H1 (cell line): ENCODE measurements at regions of chr1 and their contacts with region 1.

Region 1: DNA sequence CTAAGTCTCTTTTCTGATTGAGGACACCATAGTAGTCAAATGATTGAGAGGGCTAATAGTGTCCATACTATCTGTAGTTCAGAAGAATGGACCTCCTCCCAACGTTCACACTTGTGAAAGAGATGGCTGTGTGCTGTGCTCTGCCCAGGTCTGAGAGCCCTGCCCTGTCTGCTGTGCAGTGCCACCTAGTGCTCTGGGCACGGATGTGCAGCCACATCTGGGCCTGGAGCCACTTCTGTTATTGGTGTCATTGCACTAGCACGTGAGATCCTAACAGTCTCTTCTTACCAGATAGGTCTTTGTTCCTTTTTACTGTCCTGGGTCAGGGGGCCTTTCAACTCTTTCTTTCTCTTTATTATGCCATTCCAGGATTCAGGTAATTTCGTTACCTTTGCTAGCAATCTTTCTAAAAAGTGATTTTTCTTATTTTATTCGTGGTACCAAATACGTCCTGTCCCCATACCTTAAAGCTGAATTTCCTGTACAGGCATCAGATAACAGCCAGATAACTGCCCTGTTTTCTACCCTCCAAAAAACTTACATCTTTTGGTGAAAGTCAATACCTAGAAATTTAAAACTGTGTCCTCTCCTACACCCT is 21.7 kb downstream of the INTS3 start:
- DNase-seq: peak; percentile 49 to 85
- H3K4me3 ChIP-seq: no peak overlapping the region
- H3K27ac ChIP-seq: no peak overlapping the region
- H3K4me1 ChIP-seq: peaks cover 3 to 34% (median 15%) of the 10 kb centered on the region in 4 experiments; a peak in 6 of 7 replicates
- H3K27me3 ChIP-seq: peaks cover 0 to 2% (median 0%) of the 10 kb centered on the region in 4 experiments; a peak in 1 of 7 replicates
- CTCF ChIP-seq: peak; percentile 94 to 99 (median 99)
- EP300 ChIP-seq: no peak
- POLR2A ChIP-seq: no peak
- RAD21 ChIP-seq: peak; percentile 92 to 94

Region 2: DNA sequence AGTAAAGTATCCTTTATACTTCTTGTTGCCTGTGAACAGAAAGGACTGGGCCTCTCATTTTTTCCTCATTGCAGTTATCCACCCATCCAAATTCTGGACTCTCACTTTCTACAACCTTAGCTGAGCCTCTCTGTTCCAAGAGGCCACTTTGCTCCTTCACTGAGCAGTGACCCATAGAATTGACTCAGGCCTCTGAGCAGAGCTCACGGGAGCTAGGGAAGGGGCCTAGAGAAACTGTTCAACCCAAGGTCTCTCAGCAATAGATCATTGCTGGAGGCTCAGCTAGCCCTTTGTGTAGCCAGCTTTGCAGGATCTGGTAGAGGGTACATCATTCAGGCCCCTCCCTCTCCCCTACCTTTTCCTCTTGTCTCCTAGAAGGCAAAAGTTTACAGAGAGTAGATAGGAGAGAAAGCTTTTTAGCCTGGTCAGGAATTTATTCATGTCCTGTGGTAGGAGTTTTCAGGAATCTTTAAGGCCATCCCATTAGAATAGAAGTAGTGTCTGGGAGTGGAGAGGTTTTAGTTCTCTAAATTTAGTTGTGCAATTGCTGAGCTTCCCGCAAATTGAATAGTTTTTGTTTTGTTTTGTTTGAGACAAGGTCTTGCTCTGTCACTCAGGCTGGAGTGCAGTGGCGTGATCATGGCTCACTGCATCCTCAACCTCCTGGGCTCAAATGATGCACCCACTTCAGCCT is 15.0 kb before region 1 on chr1:
- CTCF ChIA-PET with region 1: interaction called, 18 read pairs
- POLR2A ChIA-PET with region 1: interaction called, 60 read pairs
- DNase-seq: no peak
- H3K4me3 ChIP-seq: no peak overlapping the region
- H3K27ac ChIP-seq: no peak overlapping the region
- H3K4me1 ChIP-seq: peaks cover 0 to 2% (median 0%) of the 10 kb centered on the region in 4 experiments; a peak in 1 of 7 replicates
- H3K27me3 ChIP-seq: no peaks in the 10 kb centered on the region
- CTCF ChIP-seq: no peak
- EP300 ChIP-seq: no peak
- POLR2A ChIP-seq: no peak
- RAD21 ChIP-seq: no peak

Region 3: GRCh38 chr1:153763365-153764225 is 14.1 kb after region 1 on chr1:
- CTCF ChIA-PET with region 1: interaction called, 41 read pairs
- POLR2A ChIA-PET with region 1: interaction called, 8 read pairs
- DNase-seq: no peak
- H3K4me3 ChIP-seq: no peak overlapping the region
- H3K27ac ChIP-seq: no peak overlapping the region
- H3K4me1 ChIP-seq: no peaks in the 10 kb centered on the region
- H3K27me3 ChIP-seq: no peaks in the 10 kb centered on the region
- CTCF ChIP-seq: no peak
- EP300 ChIP-seq: no peak
- POLR2A ChIP-seq: no peak
- RAD21 ChIP-seq: no peak

Region 4: DNA sequence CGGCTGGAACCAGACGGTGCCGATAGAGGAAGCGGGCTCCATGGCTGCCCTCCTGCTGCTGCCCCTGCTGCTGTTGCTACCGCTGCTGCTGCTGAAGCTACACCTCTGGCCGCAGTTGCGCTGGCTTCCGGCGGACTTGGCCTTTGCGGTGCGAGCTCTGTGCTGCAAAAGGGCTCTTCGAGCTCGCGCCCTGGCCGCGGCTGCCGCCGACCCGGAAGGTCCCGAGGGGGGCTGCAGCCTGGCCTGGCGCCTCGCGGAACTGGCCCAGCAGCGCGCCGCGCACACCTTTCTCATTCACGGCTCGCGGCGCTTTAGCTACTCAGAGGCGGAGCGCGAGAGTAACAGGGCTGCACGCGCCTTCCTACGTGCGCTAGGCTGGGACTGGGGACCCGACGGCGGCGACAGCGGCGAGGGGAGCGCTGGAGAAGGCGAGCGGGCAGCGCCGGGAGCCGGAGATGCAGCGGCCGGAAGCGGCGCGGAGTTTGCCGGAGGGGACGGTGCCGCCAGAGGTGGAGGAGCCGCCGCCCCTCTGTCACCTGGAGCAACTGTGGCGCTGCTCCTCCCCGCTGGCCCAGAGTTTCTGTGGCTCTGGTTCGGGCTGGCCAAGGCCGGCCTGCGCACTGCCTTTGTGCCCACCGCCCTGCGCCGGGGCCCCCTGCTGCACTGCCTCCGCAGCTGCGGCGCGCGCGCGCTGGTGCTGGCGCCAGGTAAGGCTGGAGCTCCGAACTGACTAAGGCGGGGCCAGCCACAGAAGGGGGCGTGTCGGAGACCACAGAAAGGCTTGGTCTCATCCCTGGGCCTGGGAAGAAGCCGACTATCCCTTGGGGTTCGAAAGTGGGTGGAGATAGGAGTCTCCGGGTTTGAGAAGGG is 26.2 kb after region 1 on chr1:
- CTCF ChIA-PET with region 1: interaction called, 41 read pairs
- POLR2A ChIA-PET with region 1: interaction called, 7 read pairs
- DNase-seq: peak; percentile 70 to 92
- H3K4me3 ChIP-seq: peak overlapping the region; percentile 66 to 86 (median 83)
- H3K27ac ChIP-seq: peak overlapping the region; percentile 82
- H3K4me1 ChIP-seq: peaks cover 0 to 17% (median 11%) of the 10 kb centered on the region in 4 experiments; a peak in 6 of 7 replicates
- H3K27me3 ChIP-seq: no peaks in the 10 kb centered on the region; a peak in 1 of 7 replicates
- CTCF ChIP-seq: no peak; a peak in 1 of 4 replicates
- EP300 ChIP-seq: 0 out of 3 replicates have a peak, but pooled peaks of 1 of the 2 experiments have one; percentile 51
- POLR2A ChIP-seq: peak; percentile 70 to 93
- RAD21 ChIP-seq: peak in 1 of 2 experiments; percentile 2; a peak in 1 of 4 replicates

Region 5: DNA sequence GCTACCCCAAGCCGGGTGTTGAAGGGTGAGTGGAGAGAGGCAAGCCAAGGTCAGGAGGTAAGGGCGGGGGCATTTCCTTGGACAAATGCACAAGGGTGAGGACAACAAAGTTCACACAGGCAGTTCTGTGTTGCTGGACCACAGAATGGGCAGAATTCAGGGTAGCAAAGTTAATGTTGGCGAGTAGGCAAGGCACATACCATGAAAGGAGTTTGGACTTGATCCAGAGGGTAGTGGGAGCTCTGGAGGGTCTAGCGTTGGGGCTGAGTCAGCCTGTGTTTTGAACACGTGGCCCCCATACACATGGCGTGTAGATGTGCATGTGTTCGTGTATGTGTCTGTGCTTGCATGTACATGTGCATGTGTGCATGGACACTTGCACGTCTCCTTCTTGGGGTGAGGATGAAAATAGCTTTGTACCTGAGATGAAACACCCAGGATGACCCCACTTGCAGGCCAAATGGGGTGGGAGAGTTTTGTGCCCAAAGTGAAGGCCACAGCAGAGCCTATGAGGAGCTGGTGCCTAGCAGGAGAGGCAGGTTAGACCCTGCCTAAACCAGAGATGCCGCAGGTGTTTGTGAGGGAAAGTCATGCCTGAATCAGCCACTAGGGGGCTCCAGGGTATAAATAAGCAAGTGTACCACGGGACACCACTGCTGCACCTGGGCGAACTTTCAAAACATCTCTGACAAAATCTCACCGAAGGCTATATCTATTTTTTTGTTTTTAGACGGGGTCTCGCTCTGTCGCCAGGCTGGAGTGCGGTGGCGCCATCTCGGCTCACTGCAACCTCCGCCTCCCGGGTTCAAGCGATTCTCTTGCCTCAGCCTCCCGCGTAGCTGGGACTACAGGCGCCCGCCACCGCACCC is 47.5 kb after region 1 on chr1:
- CTCF ChIA-PET with region 1: no interaction called
- POLR2A ChIA-PET with region 1: no interaction called
- DNase-seq: peak; percentile 59 to 94
- H3K4me3 ChIP-seq: no peak overlapping the region
- H3K27ac ChIP-seq: no peak overlapping the region
- H3K4me1 ChIP-seq: peaks cover 6 to 32% (median 22%) of the 10 kb centered on the region in 4 experiments
- H3K27me3 ChIP-seq: no peaks in the 10 kb centered on the region
- CTCF ChIP-seq: peak in 2 of 3 experiments; percentile 81 to 85; a peak in 3 of 4 replicates
- EP300 ChIP-seq: no peak
- POLR2A ChIP-seq: no peak
- RAD21 ChIP-seq: peak; percentile 70 to 84